HEK293 (cell line): ENCODE measurements at regions of chr11 and their contacts with region 1.

Region 1: GRCh38 chr11:66883016-66883968 is 26.4 kb downstream of the LRFN4 start:
- H3K4me3 ChIP-seq: no peak overlapping the region
- H3K27ac ChIP-seq: no peak overlapping the region
- H3K4me1 ChIP-seq: no peaks in the 10 kb centered on the region
- CTCF ChIP-seq: peak; percentile 63

Region 2: GRCh38 chr11:66871521-66871901 is 11.8 kb before region 1 on chr11:
- CTCF ChIA-PET with region 1: interaction called, 14 read pairs
- POLR2A ChIA-PET with region 1: no interaction called
- H3K4me3 ChIP-seq: no peak overlapping the region
- H3K27ac ChIP-seq: no peak overlapping the region
- H3K4me1 ChIP-seq: no peaks in the 10 kb centered on the region
- CTCF ChIP-seq: no peak

Region 3: GRCh38 chr11:66976048-66976467 is 92.8 kb after region 1 on chr11:
- CTCF ChIA-PET with region 1: interaction called, 21 read pairs
- POLR2A ChIA-PET with region 1: no interaction called
- H3K4me3 ChIP-seq: no peak overlapping the region
- H3K27ac ChIP-seq: no peak overlapping the region
- H3K4me1 ChIP-seq: no peaks in the 10 kb centered on the region
- CTCF ChIP-seq: peak; percentile 56